ENCODE measurements at regions of chr19 and their contacts with region 1.

Region 1: DNA sequence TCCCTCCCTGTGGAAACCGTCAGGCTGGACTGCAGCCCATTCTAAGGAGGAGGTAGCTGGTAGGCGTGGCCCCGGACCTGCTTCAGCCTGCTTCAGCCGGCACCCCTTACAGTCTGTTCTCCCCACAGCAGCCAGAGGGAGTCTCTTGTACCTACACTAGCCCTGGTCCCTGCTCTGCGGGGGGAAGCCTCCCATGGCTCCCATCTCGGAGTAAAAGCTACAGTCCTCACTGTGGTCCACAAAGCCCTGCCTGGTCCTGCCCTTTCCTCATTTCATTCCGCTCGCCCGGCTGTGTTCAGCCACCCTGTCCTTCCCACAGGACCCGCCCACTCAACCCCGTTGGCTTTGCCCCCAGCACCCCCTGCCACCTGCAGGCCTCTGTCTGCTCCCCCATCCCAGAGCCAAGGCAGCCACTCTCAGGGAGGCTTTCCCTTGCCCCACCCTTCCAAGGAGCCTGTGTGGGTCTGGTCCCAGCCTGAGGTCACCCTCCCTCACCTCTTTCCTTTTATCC is 1.3 kb downstream of the PGLYRP1 start:
- DNase-seq: peak; percentile 61
- ATAC-seq: peak; percentile 53
- H3K4me3 Mint-ChIP-seq: no peak overlapping the region
- H3K27ac Mint-ChIP-seq: peak overlapping the region; percentile 72; the same call in 1 of the 2 replicates
- H3K4me1 Mint-ChIP-seq: peaks cover 19% of the 10 kb centered on the region
- H3K27me3 Mint-ChIP-seq: peaks cover 4% of the 10 kb centered on the region
- CTCF ChIP-seq: no peak

Region 2: GRCh38 chr19:46049597-46049996 is 28.0 kb after region 1 on chr19:
- CTCF ChIA-PET with region 1: interaction called, 80 read pairs
- POLR2A ChIA-PET with region 1: no interaction called
- DNase-seq: peak; percentile 79
- ATAC-seq: peak; percentile 99
- H3K4me3 Mint-ChIP-seq: no peak overlapping the region
- H3K27ac Mint-ChIP-seq: no peak overlapping the region; the same call in 1 of the 2 replicates
- H3K4me1 Mint-ChIP-seq: no peaks in the 10 kb centered on the region
- H3K27me3 Mint-ChIP-seq: peaks cover 74% of the 10 kb centered on the region
- CTCF ChIP-seq: peak; percentile 37; the same call in 1 of the 2 replicates